GM12878 (cell line): ENCODE measurements at regions of chr17 and their contacts with region 1.

Region 1: GRCh38 chr17:50087246-50087911 is 7.8 kb upstream of the PDK2 start:
- DNase-seq: no peak
- ATAC-seq: peak; percentile 99
- H3K4me3 ChIP-seq: no peak overlapping the region
- H3K27ac ChIP-seq: no peak overlapping the region
- H3K4me1 ChIP-seq: no peaks in the 10 kb centered on the region
- H3K27me3 ChIP-seq: no peaks in the 10 kb centered on the region
- CTCF ChIP-seq: peak; percentile 93 to 99 (median 98)
- EP300 ChIP-seq: no peak
- POLR2A ChIP-seq: no peak
- RAD21 ChIP-seq: peak; percentile 94

Region 2: GRCh38 chr17:49861150-49861892 is 226.1 kb before region 1 on chr17:
- CTCF ChIA-PET with region 1: interaction called, 5 read pairs
- POLR2A ChIA-PET with region 1: no interaction called
- RAD21 ChIA-PET with region 1: no interaction called
- SMC1A ChIA-PET with region 1: no interaction called
- in situ Hi-C with region 1: no loop called
- intact Hi-C with region 1: loop called (anchors 5 kb)
- DNase-seq: no peak
- ATAC-seq: peak; percentile 75
- H3K4me3 ChIP-seq: no peak overlapping the region
- H3K27ac ChIP-seq: no peak overlapping the region
- H3K4me1 ChIP-seq: no peaks in the 10 kb centered on the region
- H3K27me3 ChIP-seq: no peaks in the 10 kb centered on the region
- CTCF ChIP-seq: peak; percentile 86 to 89 (median 88); a peak in 5 of 6 replicates
- EP300 ChIP-seq: no peak
- POLR2A ChIP-seq: no peak
- RAD21 ChIP-seq: peak; percentile 86

Region 3: DNA sequence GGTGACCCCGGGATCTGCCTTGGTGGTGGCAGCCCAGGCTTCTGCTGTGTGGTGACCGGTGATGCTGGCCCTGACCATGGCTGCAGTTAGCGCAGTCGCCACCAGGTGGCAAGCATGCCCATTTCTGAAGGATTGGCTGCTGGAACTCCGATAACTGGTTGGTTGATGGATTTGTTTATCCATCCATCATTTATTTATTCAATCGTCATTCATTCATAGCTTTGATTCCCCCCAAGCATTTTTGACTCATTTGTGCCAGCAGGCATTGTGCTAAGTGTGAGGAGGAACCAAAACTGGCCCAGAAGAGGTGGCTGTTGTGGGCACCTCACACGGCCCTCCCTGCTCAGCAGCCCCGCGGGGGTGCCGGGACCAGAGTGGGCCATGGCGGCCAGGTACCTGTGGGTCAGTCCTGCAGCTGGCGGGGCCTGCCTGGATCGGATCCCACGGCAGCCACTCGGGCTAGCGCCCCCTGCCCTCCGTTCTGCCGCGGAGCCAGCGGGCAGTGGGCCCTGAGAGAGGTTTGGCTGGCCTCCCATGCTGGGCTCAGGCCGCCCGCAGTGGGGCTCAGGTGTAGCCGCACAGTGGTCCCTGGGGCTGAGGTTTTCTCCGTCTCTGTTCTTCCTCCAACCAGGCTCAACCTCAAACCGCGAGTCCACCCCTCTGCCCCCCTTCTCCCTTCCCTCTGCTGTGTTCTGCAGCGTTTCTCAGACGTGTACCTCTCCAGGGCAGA is 60.3 kb before region 1 on chr17:
- CTCF ChIA-PET with region 1: interaction called, 118 read pairs
- POLR2A ChIA-PET with region 1: no interaction called
- RAD21 ChIA-PET with region 1: interaction called, 19 read pairs
- SMC1A ChIA-PET with region 1: interaction called, 10 read pairs
- in situ Hi-C with region 1: loop called (anchors 5 kb)
- intact Hi-C with region 1: loop called (anchors 1 kb)
- DNase-seq: no peak
- ATAC-seq: peak; percentile 95
- H3K4me3 ChIP-seq: no peak overlapping the region
- H3K27ac ChIP-seq: no peak overlapping the region
- H3K4me1 ChIP-seq: no peaks in the 10 kb centered on the region
- H3K27me3 ChIP-seq: peaks cover 0 to 2% of the 10 kb centered on the region in 2 experiments; a peak in 3 of 4 replicates
- CTCF ChIP-seq: peak; percentile 93 to 95 (median 95)
- EP300 ChIP-seq: no peak
- POLR2A ChIP-seq: no peak
- RAD21 ChIP-seq: peak; percentile 77

Region 4: GRCh38 chr17:50191359-50192143 is 104.2 kb after region 1 on chr17:
- CTCF ChIA-PET with region 1: no interaction called
- POLR2A ChIA-PET with region 1: no interaction called
- RAD21 ChIA-PET with region 1: no interaction called
- SMC1A ChIA-PET with region 1: no interaction called
- in situ Hi-C with region 1: no loop called
- intact Hi-C with region 1: no loop called
- DNase-seq: no peak
- ATAC-seq: no peak
- H3K4me3 ChIP-seq: no peak overlapping the region
- H3K27ac ChIP-seq: no peak overlapping the region
- H3K4me1 ChIP-seq: peaks cover 18% of the 10 kb centered on the region
- H3K27me3 ChIP-seq: no peaks in the 10 kb centered on the region
- CTCF ChIP-seq: no peak
- EP300 ChIP-seq: no peak
- POLR2A ChIP-seq: no peak
- RAD21 ChIP-seq: no peak